ENCODE measurements at regions of chr20 and their contacts with region 1.

Region 1: DNA sequence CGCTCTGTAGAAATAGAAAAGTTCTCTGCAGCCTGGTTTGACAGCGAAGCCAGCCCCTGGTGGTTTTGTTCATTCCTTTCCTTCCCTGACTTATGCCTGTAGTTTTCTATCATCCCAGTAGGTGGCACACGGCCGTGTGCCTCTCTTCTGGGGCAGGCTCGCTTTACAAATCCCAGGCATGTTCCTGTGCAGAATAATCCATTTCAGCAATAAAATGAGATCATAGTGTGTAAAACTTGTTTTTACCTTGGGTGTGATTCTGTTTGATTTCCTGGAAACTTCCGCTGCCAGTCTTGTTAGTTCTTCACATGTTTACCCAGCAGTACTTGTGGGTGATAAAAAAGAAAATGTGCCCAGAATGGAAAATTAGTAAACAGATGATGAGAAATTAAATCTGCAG is 7.4 kb upstream of the INSM1 start:
- ATAC-seq: peak in 7 of 8 experiments; percentile 14 to 92 (median 41)
- H3K4me3 ChIP-seq: no peak overlapping the region
- H3K27ac ChIP-seq: no peak overlapping the region
- H3K4me1 ChIP-seq: peaks cover 10 to 14% of the 10 kb centered on the region in 2 donors

Region 2: GRCh38 chr20:20037960-20038359 is 322.5 kb before region 1 on chr20:
- in situ Hi-C with region 1: no loop called
- ATAC-seq: no peak
- H3K4me3 ChIP-seq: no peak overlapping the region
- H3K27ac ChIP-seq: no peak overlapping the region
- H3K4me1 ChIP-seq: no peaks in the 10 kb centered on the region

Region 3: GRCh38 chr20:20150241-20150640 is 210.2 kb before region 1 on chr20:
- in situ Hi-C with region 1: no loop called
- ATAC-seq: no peak
- H3K4me3 ChIP-seq: no peak overlapping the region
- H3K27ac ChIP-seq: no peak overlapping the region
- H3K4me1 ChIP-seq: no peaks in the 10 kb centered on the region

Region 4: DNA sequence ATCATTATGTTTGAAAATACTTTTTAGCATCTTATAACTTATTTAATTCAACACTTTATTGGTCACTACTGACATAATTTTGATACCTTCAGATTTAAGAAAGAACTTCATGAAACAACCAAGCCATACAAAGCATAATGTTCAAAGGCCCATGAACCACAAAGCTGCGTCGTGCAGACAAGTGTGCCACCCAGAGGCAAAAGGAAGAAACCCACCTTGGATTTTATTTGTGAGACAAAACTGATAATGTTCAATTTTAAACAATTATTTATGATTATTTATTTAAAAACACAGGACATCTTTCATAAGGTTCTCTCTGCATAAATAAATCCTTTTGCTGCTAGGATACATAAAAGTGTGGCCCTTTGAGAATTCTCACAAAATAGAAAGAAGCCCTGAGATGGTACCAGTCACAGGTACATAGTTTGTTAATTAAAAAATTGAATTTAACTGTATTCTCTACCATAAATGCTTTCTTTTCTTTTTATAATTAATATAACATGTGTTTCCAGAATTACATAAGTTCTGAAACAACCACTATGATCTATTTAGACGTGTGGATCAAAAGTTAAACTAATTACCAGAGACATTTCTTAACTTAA is 208.2 kb after region 1 on chr20:
- in situ Hi-C with region 1: loop called in 6 of 9 experiments (anchors 25 kb)
- ATAC-seq: peak in 2 of 8 experiments; percentile 35 to 45
- H3K4me3 ChIP-seq: no peak overlapping the region
- H3K27ac ChIP-seq: no peak overlapping the region
- H3K4me1 ChIP-seq: no peaks in the 10 kb centered on the region

Measured in motor neuron (in vitro differentiated cells).